ENCODE measurements at regions of chr4 and their contacts with region 1.

Region 1: GRCh38 chr4:153344131-153345010 is at the start of gene MND1:
- DNase-seq: peak; percentile 81 to 90
- H3K4me3 ChIP-seq: peak within 1 kb of the TSS; percentile 77 to 81
- H3K27ac ChIP-seq: peak within 1 kb of the TSS; percentile 50
- H3K4me1 ChIP-seq: peaks cover 0 to 30% (median 0%) of the 10 kb centered on the region in 4 donors
- H3K27me3 ChIP-seq: no peaks in the 10 kb centered on the region
- CTCF ChIP-seq: peak; percentile 83 to 99

Region 2: GRCh38 chr4:153466081-153466948 is 121.9 kb after region 1 on chr4 and contains the start of gene TMEM131L:
- intact Hi-C with region 1: loop called (anchors 5 kb)
- DNase-seq: peak; percentile 67 to 85
- H3K4me3 ChIP-seq: peak within 1 kb of the TSS; percentile 96 to 99
- H3K27ac ChIP-seq: peak within 1 kb of the TSS; percentile 92 to 95
- H3K4me1 ChIP-seq: peaks cover 0 to 55% (median 26%) of the 10 kb centered on the region in 4 donors
- H3K27me3 ChIP-seq: no peaks in the 10 kb centered on the region
- CTCF ChIP-seq: peak in 1 of 2 experiments; percentile 32

Region 3: DNA sequence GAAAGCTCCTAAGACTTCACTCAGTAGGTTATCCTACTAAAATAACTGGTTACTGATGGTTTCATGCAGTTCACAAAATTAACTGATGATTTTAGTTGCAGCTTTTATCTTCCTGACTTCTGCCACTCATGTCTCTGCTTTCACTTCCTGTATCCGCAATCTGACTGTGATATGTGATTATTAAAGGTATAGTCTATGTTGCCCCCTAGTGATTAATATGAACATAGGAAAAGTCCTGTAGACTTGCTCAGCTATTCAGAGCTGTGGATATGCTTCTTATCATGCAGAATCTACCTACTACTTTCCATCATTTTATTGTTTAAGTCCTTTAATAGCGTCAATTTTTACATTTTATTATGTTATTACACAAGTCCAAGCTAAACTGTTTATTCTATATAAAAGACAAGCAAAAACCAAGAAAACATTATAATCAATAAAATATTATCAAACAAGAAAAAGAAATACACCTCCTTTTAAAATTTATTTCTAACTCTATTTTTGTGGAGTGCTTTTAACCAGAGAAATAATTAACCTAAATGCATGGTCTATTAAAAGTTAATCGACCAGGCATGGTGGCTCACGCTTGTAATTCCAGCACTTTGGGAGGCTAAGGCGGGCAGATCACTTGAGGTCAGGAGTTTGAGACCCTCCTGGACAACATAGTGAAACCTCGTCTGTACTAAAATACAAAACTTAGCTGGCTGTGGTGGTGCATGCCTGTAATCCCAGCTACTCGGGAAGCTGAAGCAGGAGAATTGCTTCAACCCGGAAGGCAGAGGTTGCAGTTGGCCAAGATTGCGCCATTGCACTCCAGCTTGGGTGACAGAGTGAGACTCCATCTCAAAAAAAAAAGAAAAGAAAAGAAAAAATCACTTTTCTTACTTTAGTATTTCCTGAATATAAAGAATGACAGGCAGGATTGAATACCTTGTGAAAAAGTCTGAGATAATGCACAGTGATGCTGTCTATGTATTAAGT is 299.3 kb after region 1 on chr4:
- intact Hi-C with region 1: loop called (anchors 10 kb)
- DNase-seq: no peak
- H3K4me3 ChIP-seq: no peak overlapping the region
- H3K27ac ChIP-seq: no peak overlapping the region
- H3K4me1 ChIP-seq: peaks cover 0 to 30% (median 9%) of the 10 kb centered on the region in 4 donors
- H3K27me3 ChIP-seq: no peaks in the 10 kb centered on the region
- CTCF ChIP-seq: peak; percentile 47 to 51

Region 4: DNA sequence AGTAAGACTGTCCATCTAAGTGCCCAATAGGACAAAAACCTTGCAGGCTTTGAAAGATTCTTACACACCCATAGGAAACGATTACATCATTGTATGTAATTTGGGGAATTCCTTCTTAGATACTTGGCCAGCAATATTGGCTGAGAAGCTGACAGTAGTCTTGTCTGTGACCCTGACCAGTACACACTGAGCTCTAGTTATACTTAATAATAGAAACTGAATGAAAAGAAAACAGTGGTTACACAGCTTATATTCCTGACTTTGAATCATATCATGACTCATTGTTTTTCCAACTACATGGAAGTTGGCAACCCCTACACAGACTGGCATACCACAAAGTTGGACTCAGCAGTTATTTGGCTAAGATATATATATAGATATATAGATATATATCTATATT is 332.6 kb after region 1 on chr4:
- intact Hi-C with region 1: no loop called
- DNase-seq: no peak
- H3K4me3 ChIP-seq: no peak overlapping the region
- H3K27ac ChIP-seq: peak overlapping the region; percentile 38 to 50
- H3K4me1 ChIP-seq: peaks cover 0 to 27% (median 11%) of the 10 kb centered on the region in 4 donors
- H3K27me3 ChIP-seq: no peaks in the 10 kb centered on the region
- CTCF ChIP-seq: no peak

Region 5: DNA sequence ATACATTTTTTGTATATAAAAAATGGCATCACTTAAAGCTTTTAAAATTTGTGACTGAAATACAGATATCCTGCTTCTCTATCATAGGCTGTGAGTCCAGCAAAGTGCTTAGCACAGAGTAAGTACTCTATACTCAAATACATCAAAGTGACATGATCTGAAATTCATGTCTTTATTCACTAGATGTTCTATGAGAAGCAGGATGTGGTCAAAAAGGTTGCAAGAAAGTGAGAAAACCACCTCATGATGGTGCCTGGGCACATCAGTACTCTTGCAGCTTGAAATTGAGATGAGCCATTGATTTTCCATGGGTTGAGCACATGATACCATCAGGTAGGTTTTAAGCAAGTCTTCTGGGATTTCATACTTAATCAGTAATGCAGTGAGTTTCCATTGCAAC is 464.9 kb after region 1 on chr4:
- intact Hi-C with region 1: no loop called
- DNase-seq: no peak
- H3K4me3 ChIP-seq: no peak overlapping the region
- H3K27ac ChIP-seq: no peak overlapping the region
- H3K4me1 ChIP-seq: no peaks in the 10 kb centered on the region
- H3K27me3 ChIP-seq: no peaks in the 10 kb centered on the region
- CTCF ChIP-seq: no peak